ENCODE measurements at regions of chr15 and their contacts with region 1.

Region 1: GRCh38 chr15:32893421-32893820 is 175.6 kb downstream of the GREM1 start:
- DNase-seq: no peak
- H3K4me3 ChIP-seq: no peak overlapping the region
- H3K27ac ChIP-seq: no peak overlapping the region
- H3K4me1 ChIP-seq: no peaks in the 10 kb centered on the region
- H3K27me3 ChIP-seq: no peaks in the 10 kb centered on the region
- CTCF ChIP-seq: no peak

Region 2: DNA sequence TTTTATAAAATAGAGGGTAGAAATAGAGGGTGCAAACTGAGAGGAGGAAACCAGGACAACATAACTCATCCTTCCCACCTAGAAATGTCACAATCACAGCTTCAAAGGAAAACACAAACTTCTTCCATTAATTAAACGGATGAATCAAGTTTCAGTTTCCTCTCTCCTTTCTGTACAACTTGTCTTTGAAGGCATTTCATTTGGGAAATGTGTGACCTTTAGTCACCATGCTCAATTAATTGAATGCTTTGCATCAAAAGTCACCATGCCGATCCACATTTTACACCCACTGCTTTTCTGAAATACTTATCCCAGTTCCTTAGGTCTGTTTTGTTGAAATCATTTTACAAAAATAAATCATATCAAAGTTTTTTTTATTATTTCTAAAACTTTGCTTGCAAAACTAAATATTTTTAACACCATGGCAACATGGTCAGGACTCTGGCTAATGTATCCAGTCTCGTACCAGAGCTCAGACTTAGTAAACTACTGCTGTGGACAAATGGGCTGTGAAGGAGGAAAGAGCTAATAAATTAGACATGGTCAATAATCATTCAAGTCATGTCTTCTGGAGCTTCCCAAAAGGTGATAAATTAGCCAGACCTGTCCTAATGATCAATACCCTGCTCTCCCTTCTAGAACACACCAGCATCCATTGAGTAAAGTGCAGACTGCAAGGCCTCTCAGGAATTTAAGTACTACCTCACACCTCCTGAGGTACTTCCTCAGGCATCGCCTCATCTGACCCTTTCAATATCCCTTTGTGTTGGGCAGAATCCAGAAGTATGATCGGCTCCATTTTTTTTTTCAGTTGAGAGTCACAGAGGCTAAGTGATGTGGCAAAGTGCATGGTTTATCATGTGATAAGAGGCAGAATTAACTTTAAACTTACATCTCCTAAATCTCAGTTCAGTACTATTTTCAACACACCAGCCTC is 14.3 kb before region 1 on chr15:
- CTCF ChIA-PET with region 1: no interaction called
- dilution Hi-C with region 1: no loop called
- in situ Hi-C with region 1: no loop called
- intact Hi-C with region 1: loop called (anchors 2 kb)
- DNase-seq: no peak
- H3K4me3 ChIP-seq: no peak overlapping the region
- H3K27ac ChIP-seq: no peak overlapping the region
- H3K4me1 ChIP-seq: no peaks in the 10 kb centered on the region
- H3K27me3 ChIP-seq: no peaks in the 10 kb centered on the region
- CTCF ChIP-seq: no peak